ENCODE measurements at regions of chr5 and their contacts with region 1.

Region 1: DNA sequence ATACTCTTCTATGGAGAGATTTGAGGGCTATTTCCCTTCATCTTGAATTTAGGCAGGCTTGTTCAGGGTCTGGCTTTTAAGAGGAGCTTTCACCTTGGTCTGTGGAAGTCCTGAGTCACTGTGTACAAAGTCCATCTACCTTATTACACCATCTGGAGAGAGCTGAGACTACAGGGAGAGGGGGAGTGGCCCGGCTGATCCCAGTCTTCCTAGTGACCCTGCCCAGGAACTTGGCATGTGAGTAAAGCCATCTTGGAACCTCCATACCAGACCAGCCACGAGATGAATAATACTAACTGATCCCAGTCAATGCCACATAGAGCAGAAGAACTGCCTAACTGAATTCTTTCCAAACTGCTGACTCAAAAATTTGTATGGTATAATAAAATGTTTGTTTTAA is 8.4 kb upstream of the IL6ST start:
- DNase-seq: peak; percentile 90
- ATAC-seq: peak; percentile 84
- H3K4me3 ChIP-seq: no peak overlapping the region
- H3K27ac ChIP-seq: peak overlapping the region; percentile 65
- H3K4me1 ChIP-seq: peaks cover 41% of the 10 kb centered on the region
- H3K27me3 ChIP-seq: no peaks in the 10 kb centered on the region
- CTCF ChIP-seq: no peak
- EP300 ChIP-seq: peak in 1 of 2 experiments; percentile 78; a peak in 2 of 4 replicates
- POLR2A ChIP-seq: no peak
- RAD21 ChIP-seq: no peak

Region 2: GRCh38 chr5:56026863-56027300 is 23.7 kb after region 1 on chr5:
- CTCF ChIA-PET with region 1: no interaction called
- POLR2A ChIA-PET with region 1: interaction called, 10 read pairs
- in situ Hi-C with region 1: no loop called
- intact Hi-C with region 1: no loop called
- DNase-seq: no peak
- ATAC-seq: no peak
- H3K4me3 ChIP-seq: no peak overlapping the region
- H3K27ac ChIP-seq: peak overlapping the region; percentile 47
- H3K4me1 ChIP-seq: peaks cover 63% of the 10 kb centered on the region
- H3K27me3 ChIP-seq: no peaks in the 10 kb centered on the region
- CTCF ChIP-seq: no peak
- EP300 ChIP-seq: no peak
- POLR2A ChIP-seq: no peak
- RAD21 ChIP-seq: no peak

Measured in HepG2 (cell line).